Cardiac septum (tissue), 1 donor: ENCODE measurements at regions of chr22 and their contacts with region 1.

Region 1: DNA sequence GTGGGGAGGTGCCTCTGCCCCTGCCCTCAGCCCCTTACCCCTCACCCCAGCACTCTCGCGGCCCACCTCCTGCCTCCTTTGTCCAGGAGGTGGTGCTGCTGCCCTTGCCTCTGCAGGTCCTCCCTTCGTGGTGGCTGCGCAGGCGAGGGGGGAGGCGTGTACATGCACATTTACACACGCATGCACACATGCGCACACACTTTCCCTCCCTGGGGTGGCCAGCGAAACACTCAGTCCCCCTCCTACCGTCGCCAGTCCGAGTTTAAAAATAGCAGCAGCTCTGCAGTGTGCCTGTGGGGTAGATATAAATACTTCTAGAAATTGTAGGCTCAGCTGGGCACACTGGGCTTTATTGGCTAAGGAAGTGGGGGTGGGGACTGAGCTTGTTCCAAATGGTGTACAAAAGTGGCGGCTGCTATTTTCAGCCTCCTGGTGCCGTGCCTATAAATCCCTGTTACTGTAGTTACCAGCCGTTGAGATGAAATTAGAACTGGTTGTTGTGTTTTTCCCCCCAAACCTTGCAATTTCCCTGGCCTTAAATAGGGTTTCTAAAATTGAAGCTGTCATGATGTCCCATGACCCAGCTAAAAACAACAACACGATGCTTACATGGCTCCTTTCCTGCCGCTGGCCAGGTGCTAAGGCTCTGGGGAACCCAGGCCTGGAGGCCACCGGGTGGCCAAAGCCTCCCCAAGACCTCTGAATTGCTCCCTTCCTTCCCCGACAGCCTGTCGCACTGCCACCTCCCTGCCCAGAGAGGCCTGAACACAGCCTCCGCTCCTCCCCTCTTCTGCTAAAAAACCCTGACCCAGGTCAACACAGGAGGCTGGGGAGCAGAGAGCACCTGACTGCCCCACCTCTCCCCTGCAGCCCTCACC is 12.4 kb downstream of the PICK1 start:
- DNase-seq: peak; percentile 87

Region 2: DNA sequence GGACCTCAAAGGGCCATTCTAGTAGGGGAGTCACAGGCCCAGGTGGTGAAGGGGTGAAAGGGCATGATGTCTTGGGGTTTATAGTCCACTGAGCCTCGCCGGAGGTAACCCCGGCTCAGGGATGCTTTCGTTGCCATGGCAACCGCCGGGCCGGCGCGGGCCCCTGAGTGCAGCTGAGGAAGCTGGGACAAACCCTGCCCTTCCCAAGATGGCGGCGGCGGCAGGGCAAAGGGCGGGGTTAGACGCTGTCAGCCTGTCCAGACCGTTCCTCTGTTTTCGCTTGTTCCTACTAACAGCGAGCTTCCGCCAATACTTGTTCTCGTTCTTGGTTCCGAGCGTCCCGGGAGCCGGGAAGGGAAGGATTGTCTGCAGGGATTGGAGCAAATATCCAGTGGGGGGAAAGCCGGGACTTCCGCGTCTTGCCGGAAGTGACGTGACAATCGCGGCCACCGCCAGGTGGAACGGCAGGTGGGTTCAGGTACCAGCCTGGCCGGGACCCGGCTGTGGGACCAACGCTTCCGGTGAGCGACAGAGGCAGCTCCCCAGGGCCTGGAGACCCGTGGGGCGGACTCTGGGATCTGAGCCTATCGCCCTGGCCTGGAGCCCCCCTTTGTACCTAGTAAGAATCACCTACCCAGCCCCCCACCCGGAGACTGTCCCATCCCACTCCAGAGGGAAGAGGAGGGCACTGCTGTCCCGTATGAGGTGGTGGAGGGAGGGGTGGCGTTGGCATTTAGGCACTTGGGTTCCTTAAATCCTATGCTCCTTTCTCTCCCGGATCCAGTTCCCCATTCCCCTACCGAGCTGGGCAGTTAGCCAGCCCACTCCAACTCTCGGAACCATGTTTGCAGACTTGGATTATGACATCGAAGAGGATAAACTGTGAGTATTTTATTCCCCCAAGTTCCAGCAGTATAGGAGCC is 12.4 kb before region 1 on chr22 and contains the start of gene PICK1:
- intact Hi-C with region 1: loop called (anchors 1 kb)
- DNase-seq: peak; percentile 92
- total RNA-seq, gene PICK1: 19.1 TPM

Region 3: DNA sequence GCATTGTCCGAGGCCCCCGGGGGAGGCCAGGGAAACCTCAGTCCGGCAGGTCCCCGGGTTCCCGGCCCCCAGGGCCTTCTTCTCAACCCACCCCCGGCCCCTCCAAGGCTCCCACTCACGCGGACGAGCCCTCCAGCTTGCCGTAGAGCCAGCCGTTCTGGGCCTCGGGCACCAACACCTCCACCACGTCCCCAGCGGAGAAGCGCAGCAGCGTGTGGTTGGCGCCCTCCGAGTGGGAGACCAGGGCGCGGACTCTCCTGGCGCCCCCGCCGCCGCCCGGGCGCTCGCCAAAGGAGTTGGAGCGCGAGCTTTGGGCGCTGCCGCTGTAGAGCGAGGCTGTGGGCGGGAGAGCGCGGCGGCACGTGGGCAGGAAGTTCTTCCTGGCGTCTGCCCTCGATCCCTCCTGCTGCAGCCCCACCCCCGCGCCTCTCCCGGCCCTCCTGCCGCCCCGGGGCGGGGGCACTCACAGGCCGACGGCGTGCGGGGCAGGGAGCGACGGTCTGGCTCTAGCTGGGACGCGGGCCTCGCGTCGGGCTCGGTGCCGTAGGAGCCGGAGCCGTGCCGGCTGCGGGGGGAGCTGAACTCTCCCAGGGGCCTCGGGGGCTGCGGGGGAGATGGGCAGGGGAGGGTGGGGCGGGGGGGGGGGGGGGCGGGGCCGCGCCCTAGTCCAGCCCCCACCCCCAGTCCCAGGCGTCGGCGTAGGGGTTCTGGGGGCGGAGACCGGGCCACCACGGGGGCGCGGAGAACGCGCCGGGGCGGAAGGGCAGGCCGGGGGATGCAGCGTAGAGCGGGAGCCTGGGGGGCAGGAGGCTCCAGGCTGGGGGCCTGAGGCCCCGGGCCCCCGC is 19.2 kb after region 1 on chr22:
- intact Hi-C with region 1: no loop called
- DNase-seq: no peak